Dorsolateral prefrontal cortex (tissue), 120 donors: ENCODE measurements at regions of chr11 and their contacts with region 1.

Region 1: DNA sequence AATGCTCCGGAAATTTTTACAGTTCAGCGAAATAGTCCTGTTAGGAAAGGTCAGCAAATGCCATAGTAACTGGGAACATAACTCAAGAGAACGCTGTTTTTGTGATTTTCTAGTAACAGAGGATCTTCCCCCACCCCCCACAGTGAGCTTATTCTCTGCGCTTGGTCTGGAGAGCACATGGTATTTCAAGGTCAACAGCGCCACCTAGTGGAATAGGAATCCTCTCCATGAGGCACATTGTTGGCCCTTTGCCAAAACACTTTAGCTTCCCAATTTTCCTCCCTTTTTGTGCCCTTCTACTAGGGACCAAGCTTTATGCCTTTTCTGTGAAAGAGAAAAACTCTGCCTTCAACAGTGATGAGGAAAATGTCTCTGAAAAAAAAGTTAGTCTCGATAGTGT is 13.2 kb upstream of the OR4C12 start:
- DNase-seq: peak in 7 of 10 donors; percentile 10 to 60 (median 44)
- H3K4me3 ChIP-seq: peak overlapping the region in 3 of 59 donors; percentile 9 to 25 (median 16)
- H3K27ac ChIP-seq: no peak overlapping the region
- H3K27me3 ChIP-seq: no peaks in the 10 kb centered on the region
- CTCF ChIP-seq: peak; percentile 38 to 77 (median 65)

Region 2: GRCh38 chr11:48172818-48173609 is 1822.6 kb before region 1 on chr11:
- intact Hi-C with region 1: loop called in 1 of 2 experiments (anchors 10 kb)
- DNase-seq: peak; percentile 40 to 79 (median 71)
- H3K4me3 ChIP-seq: peak overlapping the region in 57 of 59 donors; percentile 5 to 63 (median 43)
- H3K27ac ChIP-seq: peak overlapping the region in 29 of 59 donors; percentile 0 to 78 (median 50)
- H3K27me3 ChIP-seq: no peaks in the 10 kb centered on the region
- CTCF ChIP-seq: peak; percentile 52 to 91 (median 82)

Region 3: DNA sequence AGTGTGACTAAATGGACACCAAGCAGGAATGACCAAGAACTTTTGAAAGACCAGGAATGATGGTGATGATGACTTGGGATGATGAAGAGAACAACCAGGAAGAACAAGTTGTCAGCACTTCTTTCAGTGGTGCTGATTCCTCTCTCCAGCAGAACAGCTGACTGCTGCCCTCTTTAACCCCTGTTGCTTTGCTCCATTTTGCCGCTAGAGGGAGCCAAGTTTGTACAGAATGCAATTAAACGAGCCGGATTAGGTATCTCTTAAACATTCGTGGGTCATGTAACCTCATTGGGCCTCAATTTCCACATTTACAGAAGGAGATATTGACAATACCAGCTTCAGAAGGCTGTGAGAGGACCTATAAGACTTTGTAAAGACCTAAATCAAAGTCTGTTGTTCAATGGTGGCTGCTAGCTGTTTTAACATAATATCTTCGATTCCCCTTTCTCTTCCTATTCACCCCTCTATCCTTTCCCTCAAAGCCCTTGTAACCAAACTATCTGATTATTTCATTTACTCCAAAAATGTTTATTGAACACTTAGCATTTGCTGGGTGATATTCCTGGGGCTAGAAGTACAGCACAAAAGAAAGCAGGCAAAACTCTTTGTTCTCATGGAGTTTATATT is 1687.7 kb before region 1 on chr11:
- intact Hi-C with region 1: loop called in 1 of 2 experiments (anchors 5 kb)
- DNase-seq: peak in 7 of 10 donors; percentile 9 to 70 (median 55)
- H3K4me3 ChIP-seq: peak overlapping the region in 1 of 59 donors; percentile 12
- H3K27ac ChIP-seq: no peak overlapping the region
- H3K27me3 ChIP-seq: peaks cover 0 to 4% (median 0%) of the 10 kb centered on the region in 45 donors
- CTCF ChIP-seq: peak; percentile 55 to 85 (median 78)

Region 4: GRCh38 chr11:49230511-49230910 is 765.1 kb before region 1 on chr11:
- intact Hi-C with region 1: loop called in 1 of 2 experiments (anchors 10 kb)
- DNase-seq: no peak
- H3K4me3 ChIP-seq: no peak overlapping the region
- H3K27ac ChIP-seq: peak overlapping the region in 4 of 59 donors; percentile 13 to 32 (median 29)
- H3K27me3 ChIP-seq: no peaks in the 10 kb centered on the region
- CTCF ChIP-seq: peak in 30 of 56 donors; percentile 11 to 55 (median 34)

Region 5: DNA sequence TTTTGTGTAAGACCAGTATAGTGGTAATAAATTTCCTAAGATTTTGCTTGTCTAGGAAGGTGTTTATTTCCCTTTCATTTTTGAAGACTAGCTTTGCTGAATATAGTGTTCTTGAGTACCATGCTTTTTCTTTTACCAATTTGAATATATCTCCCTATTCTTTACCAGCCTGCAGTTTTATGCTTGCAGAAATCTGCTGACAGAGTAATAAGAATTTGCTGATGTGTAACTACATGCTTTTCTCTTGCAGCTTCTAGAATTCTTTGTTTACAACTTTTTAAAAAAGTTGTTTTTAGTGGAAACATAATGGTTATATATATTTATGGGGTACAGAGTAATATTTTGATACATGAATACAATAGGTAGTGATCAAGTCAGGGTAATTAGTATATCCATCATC is 462.4 kb before region 1 on chr11:
- intact Hi-C with region 1: no loop called
- DNase-seq: no peak
- H3K4me3 ChIP-seq: no peak overlapping the region
- H3K27ac ChIP-seq: no peak overlapping the region
- H3K27me3 ChIP-seq: no peaks in the 10 kb centered on the region
- CTCF ChIP-seq: no peak

Region 6: DNA sequence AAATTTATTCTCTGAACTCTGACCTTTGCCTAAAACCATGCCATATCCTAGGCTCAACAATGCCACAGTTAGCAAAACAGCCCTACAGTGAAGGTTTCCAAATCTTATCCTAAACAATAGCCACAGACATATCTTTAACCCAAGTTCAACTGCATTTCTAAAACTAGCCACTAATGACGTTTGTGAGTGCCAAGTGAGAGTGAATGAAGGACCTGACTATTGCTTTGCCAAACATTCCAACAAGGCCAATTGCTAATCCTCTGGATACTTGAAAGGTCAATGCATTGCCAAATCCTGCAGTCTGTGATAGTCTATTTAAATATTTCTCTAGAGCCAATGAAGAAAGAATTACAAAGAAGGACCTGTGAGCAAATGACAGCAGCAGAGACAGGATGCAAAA is 34.6 kb after region 1 on chr11:
- intact Hi-C with region 1: no loop called
- DNase-seq: no peak
- H3K4me3 ChIP-seq: no peak overlapping the region
- H3K27ac ChIP-seq: no peak overlapping the region
- H3K27me3 ChIP-seq: no peaks in the 10 kb centered on the region
- CTCF ChIP-seq: no peak